Cardiac septum (tissue), 1 donor: ENCODE measurements at regions of chr15 and their contacts with region 1.

Region 1: DNA sequence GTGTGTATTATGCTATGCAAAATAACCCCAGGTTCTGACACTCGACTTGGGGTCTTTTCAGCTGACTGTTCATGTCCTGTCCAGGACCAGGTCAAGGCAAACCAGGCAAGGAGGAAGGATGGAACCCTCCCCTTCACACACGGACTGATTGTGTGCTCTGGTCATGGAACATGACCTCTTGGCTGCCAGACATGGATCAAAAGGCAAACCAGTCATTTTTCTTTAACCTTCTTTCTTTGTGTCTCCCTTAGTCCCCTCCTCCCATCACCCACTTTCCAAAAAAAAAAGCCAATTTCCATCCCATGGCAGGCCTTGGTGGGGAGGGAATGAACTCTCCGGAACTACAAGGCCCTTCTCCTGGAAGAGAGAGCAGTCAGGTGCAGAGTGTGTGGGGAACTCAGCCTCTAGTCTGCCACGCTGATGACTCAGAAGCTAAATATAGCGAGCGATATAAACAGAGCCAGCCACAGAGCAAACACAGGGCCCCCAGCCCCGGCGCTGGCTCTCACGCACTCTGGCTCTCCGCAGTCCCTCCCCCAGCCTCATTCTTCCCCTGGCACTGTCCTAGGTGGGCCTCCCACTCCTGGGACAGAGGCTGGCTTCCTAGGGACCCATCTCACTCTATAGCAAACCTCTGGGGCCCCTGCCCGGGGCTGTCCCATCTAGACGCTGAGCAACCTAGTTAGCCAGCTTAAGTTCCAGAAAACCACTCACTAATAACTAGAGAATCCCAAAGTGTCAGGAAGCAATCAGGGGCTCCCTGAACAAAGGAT is 10.0 kb downstream of the BMF start:
- DNase-seq: peak; percentile 88

Region 2: DNA sequence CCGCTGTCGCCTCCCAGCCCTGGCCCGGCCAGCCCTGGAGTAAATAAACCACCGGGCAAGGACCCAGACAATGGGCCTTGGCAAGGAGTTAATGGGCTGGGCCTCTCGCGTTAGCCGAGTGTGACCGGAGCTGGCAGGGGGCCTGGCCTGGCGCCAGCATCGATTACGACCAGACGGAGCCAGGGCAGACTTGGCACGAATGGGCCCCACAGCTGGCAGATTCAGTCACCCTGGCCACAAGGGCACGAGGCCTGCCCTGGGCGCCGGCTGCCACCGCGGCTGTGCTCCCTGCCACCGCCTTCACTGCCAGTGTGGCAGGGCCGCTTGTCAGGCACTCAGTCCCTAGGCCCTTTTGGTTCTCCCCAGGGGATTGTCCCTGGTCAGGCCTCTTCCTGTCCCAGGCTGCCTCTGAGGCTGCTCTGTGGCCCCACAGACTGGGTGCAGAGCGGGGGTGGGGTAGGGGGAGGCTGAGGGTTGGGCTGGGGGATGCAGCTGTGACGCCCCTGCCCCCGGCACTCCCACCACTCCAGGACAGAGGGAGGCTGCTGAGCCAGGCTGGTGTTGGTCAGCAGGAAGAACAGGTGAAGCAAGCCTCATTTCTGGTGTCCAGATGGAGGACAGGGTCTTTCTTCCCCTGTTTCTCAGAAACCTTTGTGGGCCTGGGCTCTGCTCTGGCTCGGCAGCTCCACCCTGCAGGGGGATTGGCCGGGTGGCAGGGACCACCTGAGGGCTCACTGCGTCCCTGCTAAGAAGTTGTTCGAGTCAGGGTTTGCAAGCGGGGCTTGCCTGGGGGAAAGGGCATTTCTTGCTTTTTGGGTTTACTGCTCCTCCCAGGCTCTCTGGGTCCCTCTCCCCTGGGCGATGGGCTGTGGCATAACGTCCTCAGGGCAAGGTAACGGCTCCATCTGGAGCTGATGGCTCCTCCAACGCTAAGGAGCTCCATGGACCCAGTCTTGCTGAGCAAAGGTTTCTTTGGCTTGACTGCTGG is 29.2 kb before region 1 on chr15:
- intact Hi-C with region 1: loop called (anchors 1 kb)
- DNase-seq: peak; percentile 94

Region 3: DNA sequence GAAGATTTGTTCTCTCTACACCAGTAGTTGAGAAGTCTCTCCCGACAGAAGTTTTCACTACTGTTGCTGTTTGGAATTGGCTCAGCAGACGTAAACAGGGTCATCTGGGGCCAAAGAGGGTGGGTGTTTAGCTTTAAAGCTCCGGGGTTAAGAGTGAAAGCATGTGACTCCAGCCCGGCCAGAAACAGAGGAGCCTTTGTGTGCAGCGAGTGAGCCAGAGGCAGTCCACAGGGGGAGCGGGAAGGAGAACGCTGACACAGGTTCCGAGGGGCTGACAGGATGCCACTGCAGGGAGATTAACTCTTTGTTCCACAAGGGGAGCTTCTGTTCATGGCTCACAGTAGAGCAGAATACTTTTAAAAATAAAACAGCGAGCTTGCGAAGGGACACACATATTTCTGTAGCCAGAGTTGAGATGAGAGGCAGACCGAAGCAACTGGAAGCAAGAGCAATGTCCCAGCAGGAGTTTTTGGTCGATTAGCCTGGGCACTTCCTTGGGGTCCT is 16.9 kb before region 1 on chr15:
- intact Hi-C with region 1: loop called (anchors 2 kb)
- DNase-seq: peak; percentile 90